ENCODE measurements at regions of chr4 and their contacts with region 1.

Region 1: GRCh38 chr4:74675673-74676279 is 118.5 kb downstream of the BTC start:
- DNase-seq: no peak
- H3K4me3 ChIP-seq: no peak overlapping the region
- H3K27ac ChIP-seq: no peak overlapping the region
- H3K4me1 ChIP-seq: no peaks in the 10 kb centered on the region
- H3K27me3 ChIP-seq: no peaks in the 10 kb centered on the region
- CTCF ChIP-seq: peak; percentile 32 to 75 (median 58)
- POLR2A ChIP-seq: no peak

Region 2: GRCh38 chr4:74370912-74371311 is 304.9 kb before region 1 on chr4:
- intact Hi-C with region 1: loop called (anchors 10 kb)
- DNase-seq: no peak
- H3K4me3 ChIP-seq: no peak overlapping the region
- H3K27ac ChIP-seq: no peak overlapping the region
- H3K4me1 ChIP-seq: peaks cover 0 to under 1% of the 10 kb centered on the region in 2 donors
- H3K27me3 ChIP-seq: no peaks in the 10 kb centered on the region
- CTCF ChIP-seq: peak in 4 of 6 experiments; percentile 11 to 45 (median 35)
- POLR2A ChIP-seq: no peak